Heart right ventricle (tissue), 16 donors: ENCODE measurements at regions of chr9 and their contacts with region 1.

Region 1: DNA sequence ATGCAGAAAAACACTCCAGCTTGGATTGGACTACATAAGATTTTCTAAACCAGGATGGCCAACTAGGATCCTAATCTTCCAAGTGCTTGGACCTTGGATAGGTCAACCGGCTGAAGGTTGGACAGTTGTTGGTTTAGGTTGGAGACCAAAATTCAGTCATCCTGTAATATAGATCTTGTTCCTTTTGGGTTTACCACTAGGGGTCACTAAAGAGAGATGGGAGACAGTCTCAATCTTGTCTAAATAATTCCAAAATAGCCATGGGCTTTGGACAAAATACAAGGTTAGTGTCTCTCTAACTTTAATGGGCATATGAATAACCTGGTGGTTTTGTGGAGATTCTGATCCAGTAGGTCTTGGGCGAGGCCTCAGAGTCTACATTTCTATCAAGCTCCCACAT is 148.7 kb upstream of the ERCC6L2 start:
- DNase-seq: no peak
- ATAC-seq: peak in 6 of 8 donors; percentile 42 to 53 (median 44)
- H3K4me3 ChIP-seq: no peak overlapping the region
- H3K27ac ChIP-seq: no peak overlapping the region
- H3K4me1 ChIP-seq: peaks cover 0 to 5% (median 0%) of the 10 kb centered on the region in 9 donors
- H3K27me3 ChIP-seq: peaks cover 0 to 21% (median 0%) of the 10 kb centered on the region in 7 donors
- CTCF ChIP-seq: peak; percentile 44 to 78 (median 71)

Region 2: DNA sequence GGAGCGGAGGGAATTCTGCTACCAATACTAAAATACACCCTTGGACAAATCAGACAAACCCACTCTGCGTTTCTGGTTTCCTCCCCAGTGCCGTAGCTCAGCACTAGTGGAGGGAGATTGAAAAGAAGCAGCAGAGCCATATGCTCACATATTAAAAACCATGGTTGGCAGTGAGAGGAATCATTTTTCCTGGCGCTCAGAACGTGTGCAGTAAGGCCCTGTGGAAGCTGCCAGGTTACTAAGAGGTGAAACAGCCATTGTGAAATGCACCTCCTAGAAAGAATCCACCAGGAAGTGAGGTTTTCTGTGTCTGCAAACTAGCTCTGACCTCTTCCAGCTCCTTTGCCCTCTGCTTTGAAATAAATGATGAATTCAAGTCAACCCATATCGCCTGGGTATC is 325.9 kb after region 1 on chr9:
- intact Hi-C with region 1: loop called in 1 of 10 experiments (anchors 5 kb)
- DNase-seq: no peak
- ATAC-seq: no peak
- H3K4me3 ChIP-seq: no peak overlapping the region
- H3K27ac ChIP-seq: no peak overlapping the region
- H3K4me1 ChIP-seq: peaks cover 0 to 11% (median 0%) of the 10 kb centered on the region in 9 donors
- H3K27me3 ChIP-seq: peaks cover 0 to 10% (median 0%) of the 10 kb centered on the region in 7 donors
- CTCF ChIP-seq: no peak

Region 3: DNA sequence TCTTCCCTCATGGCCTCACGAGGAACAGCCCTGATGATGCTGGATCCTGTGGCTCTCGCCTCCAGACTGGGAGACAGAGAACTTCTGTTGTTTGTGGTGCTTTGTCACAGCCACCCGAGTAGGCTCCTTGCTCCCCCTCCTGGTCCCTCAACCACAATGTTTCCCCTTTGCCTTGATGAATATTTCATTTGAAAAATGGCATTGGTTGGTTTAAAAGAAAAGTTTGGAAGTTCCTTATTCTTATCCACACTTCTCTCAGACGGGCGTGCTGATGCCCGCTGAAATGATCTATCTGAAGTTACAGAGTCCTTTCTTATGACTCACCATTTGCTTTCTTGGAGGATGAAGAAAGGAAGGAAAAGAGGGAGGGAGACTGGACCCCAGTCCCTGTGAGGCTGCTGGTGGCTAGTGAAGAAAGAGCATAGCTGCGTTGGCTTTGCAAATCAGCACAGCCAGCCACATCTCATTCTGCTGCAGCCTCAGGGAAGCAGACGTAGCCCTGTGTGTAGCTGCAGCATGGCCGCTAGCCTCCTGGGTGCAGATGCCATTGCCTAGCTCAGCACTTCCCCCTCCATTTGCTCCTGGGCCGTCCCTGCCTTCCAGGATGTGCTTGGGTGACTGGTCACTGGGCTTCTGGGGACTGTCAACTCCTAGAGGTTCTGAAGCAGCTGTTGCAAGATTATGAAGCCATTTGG is 334.7 kb after region 1 on chr9:
- intact Hi-C with region 1: loop called in 3 of 10 experiments (anchors 5 to 10 kb)
- DNase-seq: peak in 1 of 2 donors; percentile 43
- ATAC-seq: peak in 7 of 8 donors; percentile 65 to 85 (median 77)
- H3K4me3 ChIP-seq: no peak overlapping the region
- H3K27ac ChIP-seq: peak overlapping the region in 2 of 10 donors; percentile 10 to 84
- H3K4me1 ChIP-seq: peaks cover 0 to 30% (median 0%) of the 10 kb centered on the region in 9 donors
- H3K27me3 ChIP-seq: peaks cover 0 to 4% (median 0%) of the 10 kb centered on the region in 7 donors
- CTCF ChIP-seq: peak; percentile 13 to 61 (median 49)